Activated CD4-positive, alpha-beta T cell treated with anti-CD3 and anti-CD28 coated beads for 36 hours (primary cell): ENCODE measurements at regions of chr12 and their contacts with region 1.

Region 1: DNA sequence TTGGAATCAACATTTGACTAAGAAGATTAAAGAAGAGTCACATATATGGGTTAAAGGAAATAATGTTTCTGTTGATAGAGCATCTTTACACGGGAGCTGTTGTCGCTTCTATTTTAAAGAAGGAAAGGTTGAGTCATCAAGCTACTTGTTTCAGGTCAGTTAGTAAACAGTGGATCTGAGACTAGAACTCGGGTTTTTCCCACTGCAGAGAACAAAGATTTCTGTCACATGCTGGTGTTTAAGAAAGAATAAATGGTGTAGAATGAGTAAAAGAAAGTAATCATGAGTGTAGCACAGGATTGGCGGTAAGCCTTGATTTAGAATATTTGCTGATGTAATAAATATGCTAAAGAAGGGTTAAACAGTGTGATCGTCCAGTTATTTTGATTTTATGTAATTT is 455.5 kb downstream of the AEBP2 start:
- DNase-seq: no peak
- ATAC-seq: peak; percentile 89
- H3K4me3 Mint-ChIP-seq: no peak overlapping the region
- H3K27ac Mint-ChIP-seq: peak overlapping the region; percentile 86
- H3K4me1 Mint-ChIP-seq: peaks cover 14% of the 10 kb centered on the region
- H3K27me3 Mint-ChIP-seq: peaks cover 2% of the 10 kb centered on the region

Region 2: DNA sequence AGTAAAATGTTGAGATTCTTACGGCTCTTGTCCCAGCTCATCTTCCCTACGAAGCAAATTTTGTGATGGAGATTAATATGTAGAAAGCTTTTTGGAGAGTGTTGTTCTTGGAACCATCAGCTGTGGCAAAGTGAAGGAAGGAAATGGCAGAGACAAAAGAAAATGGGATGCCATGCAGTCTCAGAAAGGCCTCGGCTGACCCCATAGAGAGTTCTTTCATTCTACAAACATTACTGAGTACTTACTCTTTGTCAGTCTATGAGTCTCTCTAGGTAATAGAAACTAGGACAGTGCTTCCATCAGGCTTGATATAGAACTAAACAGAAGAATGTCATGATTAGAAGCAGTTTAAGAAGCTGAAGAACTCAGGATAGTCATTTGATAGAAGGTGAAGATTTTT is 631.1 kb before region 1 on chr12:
- CTCF ChIA-PET with region 1: no interaction called
- POLR2A ChIA-PET with region 1: no interaction called
- intact Hi-C with region 1: no loop called
- DNase-seq: no peak
- ATAC-seq: no peak
- H3K4me3 Mint-ChIP-seq: no peak overlapping the region
- H3K27ac Mint-ChIP-seq: no peak overlapping the region
- H3K4me1 Mint-ChIP-seq: no peaks in the 10 kb centered on the region
- H3K27me3 Mint-ChIP-seq: no peaks in the 10 kb centered on the region

Region 3: DNA sequence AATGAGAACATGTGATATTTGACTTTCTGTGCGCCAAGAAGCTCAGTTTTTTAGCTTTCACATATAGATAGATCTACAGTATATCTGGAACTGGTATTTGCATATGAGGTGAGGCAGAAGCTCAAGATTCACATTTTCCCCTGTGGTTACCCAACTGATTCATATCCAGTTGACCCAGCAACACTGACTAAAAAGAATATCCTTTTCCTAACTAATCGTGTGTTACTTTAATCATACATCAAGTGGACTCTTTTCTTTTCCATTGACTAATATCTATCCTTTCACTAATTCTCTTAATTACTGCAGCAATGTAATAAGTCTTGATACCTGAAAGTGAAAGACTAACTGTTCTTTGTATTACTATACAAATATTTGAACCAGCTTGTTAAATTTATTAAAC is 219.4 kb before region 1 on chr12:
- CTCF ChIA-PET with region 1: no interaction called
- POLR2A ChIA-PET with region 1: no interaction called
- intact Hi-C with region 1: loop called in 1 of 2 experiments (anchors 1 kb)
- DNase-seq: no peak
- ATAC-seq: peak; percentile 89
- H3K4me3 Mint-ChIP-seq: no peak overlapping the region
- H3K27ac Mint-ChIP-seq: no peak overlapping the region
- H3K4me1 Mint-ChIP-seq: peaks cover 24% of the 10 kb centered on the region
- H3K27me3 Mint-ChIP-seq: no peaks in the 10 kb centered on the region

Region 4: GRCh38 chr12:19800884-19801283 is 93.9 kb before region 1 on chr12:
- CTCF ChIA-PET with region 1: no interaction called
- POLR2A ChIA-PET with region 1: no interaction called
- intact Hi-C with region 1: loop called (anchors 1 kb)
- DNase-seq: no peak
- ATAC-seq: peak; percentile 97
- H3K4me3 Mint-ChIP-seq: no peak overlapping the region
- H3K27ac Mint-ChIP-seq: peak overlapping the region; percentile 58
- H3K4me1 Mint-ChIP-seq: peaks cover 18% of the 10 kb centered on the region
- H3K27me3 Mint-ChIP-seq: no peaks in the 10 kb centered on the region

Region 5: DNA sequence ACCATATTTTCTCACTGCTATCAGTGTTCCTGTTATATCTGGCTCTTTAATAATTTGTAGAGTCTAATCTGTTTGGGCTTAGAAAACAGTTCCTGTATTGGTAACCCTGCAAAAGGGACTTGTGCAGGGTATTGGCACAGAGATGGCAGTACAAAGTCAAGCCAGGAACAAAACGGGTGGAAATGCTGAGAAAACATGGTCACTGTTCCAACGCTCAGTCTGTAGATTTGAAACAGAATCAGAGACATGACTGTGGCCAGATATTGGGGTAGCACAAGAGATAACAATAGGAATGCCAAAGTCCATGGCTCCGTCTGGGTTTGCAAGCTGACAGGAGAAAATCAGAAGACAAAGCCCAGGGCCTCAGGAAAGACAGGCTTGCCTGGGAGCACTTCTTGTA is 182.8 kb after region 1 on chr12:
- CTCF ChIA-PET with region 1: no interaction called
- POLR2A ChIA-PET with region 1: no interaction called
- intact Hi-C with region 1: no loop called
- DNase-seq: no peak
- ATAC-seq: no peak
- H3K4me3 Mint-ChIP-seq: no peak overlapping the region
- H3K27ac Mint-ChIP-seq: no peak overlapping the region
- H3K4me1 Mint-ChIP-seq: no peaks in the 10 kb centered on the region
- H3K27me3 Mint-ChIP-seq: no peaks in the 10 kb centered on the region